Right lobe of liver (tissue), 6 donors: ENCODE measurements at regions of chr3 and their contacts with region 1.

Region 1: GRCh38 chr3:113136071-113136470 is 75.3 kb upstream of the BOC start:
- DNase-seq: no peak
- ATAC-seq: peak; percentile 22 to 61 (median 52)
- H3K4me3 ChIP-seq: no peak overlapping the region
- H3K27ac ChIP-seq: no peak overlapping the region
- H3K4me1 ChIP-seq: no peaks in the 10 kb centered on the region
- H3K27me3 ChIP-seq: no peaks in the 10 kb centered on the region
- CTCF ChIP-seq: peak; percentile 42 to 53 (median 48)
- POLR2A ChIP-seq: no peak

Region 2: GRCh38 chr3:113275929-113276750 is 140.1 kb after region 1 on chr3:
- intact Hi-C with region 1: loop called (anchors 10 kb)
- DNase-seq: no peak
- ATAC-seq: peak; percentile 49 to 80 (median 62)
- H3K4me3 ChIP-seq: peak overlapping the region in 1 of 3 donors; percentile 0
- H3K27ac ChIP-seq: no peak overlapping the region
- H3K4me1 ChIP-seq: no peaks in the 10 kb centered on the region
- H3K27me3 ChIP-seq: no peaks in the 10 kb centered on the region
- CTCF ChIP-seq: no peak
- POLR2A ChIP-seq: no peak

Region 3: DNA sequence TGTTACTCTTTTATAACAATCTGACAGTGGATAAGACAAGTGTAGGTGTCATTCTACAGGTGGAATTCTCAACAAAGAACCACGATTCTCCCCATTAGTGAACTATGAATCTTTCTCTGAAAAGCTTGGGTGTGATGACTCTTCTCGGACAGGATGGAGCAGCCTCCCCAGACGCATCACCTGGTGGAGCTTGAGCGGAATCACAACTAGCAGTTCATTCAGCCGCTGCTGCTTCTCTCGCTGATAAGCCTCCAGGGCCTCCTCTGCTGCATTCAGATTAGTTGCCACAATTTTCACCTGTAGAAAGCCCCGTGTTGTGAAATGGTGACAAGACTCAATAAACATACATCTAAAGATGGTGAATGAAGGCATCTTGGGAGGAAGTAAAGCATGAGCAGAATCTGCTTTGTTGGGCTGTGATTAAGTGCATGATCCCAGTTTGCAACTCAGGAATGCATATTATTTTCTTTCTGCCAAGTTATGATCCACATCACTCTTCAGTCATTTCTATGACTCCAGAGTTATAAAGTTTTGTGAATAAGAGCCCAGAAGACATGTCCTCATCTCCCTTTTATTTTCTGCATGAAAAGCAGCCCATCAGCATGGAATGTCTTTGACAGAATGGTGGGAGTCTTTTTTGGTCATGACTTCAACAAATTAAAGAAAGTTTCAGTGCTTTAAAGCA is 168.9 kb after region 1 on chr3:
- intact Hi-C with region 1: no loop called
- DNase-seq: no peak
- ATAC-seq: no peak
- H3K4me3 ChIP-seq: no peak overlapping the region
- H3K27ac ChIP-seq: no peak overlapping the region
- H3K4me1 ChIP-seq: no peaks in the 10 kb centered on the region
- H3K27me3 ChIP-seq: no peaks in the 10 kb centered on the region
- CTCF ChIP-seq: no peak
- POLR2A ChIP-seq: no peak

Region 4: GRCh38 chr3:114336122-114336697 is 1200.1 kb after region 1 on chr3:
- intact Hi-C with region 1: no loop called
- DNase-seq: no peak
- ATAC-seq: no peak
- H3K4me3 ChIP-seq: no peak overlapping the region
- H3K27ac ChIP-seq: no peak overlapping the region
- H3K4me1 ChIP-seq: no peaks in the 10 kb centered on the region
- H3K27me3 ChIP-seq: no peaks in the 10 kb centered on the region
- CTCF ChIP-seq: peak; percentile 30 to 42 (median 37)
- POLR2A ChIP-seq: no peak